ENCODE measurements at regions of chr7 and their contacts with region 1.

Region 1: DNA sequence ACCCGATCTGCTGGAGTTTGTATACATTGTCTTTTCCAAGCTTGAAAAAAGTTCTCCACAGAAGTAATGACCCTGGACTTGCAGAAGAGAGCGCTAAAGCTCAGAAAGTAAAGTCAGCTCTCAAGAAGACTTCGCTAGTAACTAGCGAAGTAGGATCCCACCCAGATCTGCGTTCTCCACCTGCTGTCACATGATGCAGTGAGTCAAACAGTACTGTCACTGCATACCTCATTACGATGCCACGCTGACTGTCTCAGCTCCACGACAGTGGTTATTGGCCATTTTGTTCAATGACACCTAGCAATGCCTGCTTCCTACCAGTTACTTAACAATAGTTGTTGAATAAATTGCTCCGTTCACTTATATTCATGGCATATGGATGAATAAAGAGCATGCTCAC is 29.7 kb upstream of the SEC61G start:
- DNase-seq: no peak
- ATAC-seq: peak; percentile 79

Region 2: DNA sequence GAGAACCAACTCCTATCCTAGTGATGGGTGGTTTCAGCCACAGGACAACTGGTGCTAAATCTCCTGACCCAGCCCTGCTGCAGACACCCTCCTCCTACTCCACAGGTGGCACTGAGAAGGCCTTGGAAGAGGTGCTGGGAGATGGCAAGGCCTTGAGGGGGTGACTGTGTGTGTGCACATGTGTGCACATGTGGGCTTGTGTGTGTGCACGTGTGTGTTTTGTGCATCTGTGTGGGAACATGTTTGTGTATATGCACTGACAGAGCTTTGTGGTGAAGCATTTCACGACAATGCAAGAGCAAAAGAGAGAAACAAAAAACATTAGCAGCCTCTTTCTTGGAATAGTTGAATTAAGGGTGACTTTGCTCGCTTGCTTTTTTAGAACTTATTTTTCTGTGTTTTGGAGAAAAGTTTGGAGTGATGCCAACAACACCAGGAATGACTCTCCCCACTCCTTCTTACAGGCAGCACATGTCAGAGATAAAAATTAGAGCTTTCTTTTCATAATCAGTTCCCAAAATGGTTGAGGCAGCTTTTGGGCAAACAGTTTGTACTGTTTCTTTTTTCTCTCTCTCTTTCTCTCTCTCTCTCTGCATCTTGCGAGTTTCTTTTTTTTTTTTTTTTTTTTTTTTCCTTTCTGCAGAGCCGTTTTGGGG is 99.1 kb before region 1 on chr7:
- intact Hi-C with region 1: no loop called
- DNase-seq: no peak
- ATAC-seq: no peak

Region 3: DNA sequence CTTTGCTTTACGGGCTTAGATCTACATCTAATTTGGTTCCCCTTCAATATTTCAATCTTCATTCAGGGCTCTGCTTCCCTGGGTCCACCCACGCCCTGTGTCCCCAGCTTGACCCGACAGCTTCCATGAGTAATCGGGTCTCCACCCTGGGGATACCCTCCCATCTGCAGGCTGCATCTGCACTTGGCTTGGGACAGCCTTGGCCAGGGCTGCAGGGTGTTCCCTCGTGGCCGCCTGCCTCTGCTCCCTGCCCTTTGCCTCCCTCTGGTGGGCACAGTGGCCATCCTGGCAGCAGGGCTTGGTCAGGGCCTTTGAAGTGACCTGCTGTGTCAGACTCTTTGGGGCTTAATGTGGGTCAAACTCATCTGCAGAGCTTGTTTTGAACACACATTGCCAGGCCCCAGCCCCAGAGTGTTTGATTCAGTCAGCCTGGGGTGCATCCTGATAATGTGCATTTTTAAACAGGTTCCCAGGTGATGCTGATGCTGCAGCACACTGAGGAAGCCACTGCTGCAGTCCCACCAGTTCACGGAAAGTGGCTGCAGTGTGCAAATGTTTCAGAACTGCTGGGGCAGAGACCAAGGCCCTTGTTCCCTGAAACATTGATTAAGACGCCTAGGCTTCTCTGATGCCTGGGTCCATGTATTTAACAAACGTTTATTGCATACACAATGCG is 51.0 kb after region 1 on chr7:
- intact Hi-C with region 1: loop called (anchors 1 kb)
- DNase-seq: peak; percentile 85
- ATAC-seq: peak; percentile 94